ENCODE measurements at regions of chr18 and their contacts with region 1.

Region 1: GRCh38 chr18:42025974-42026625 is 71.1 kb downstream of the PIK3C3 start:
- DNase-seq: no peak
- H3K4me3 Mint-ChIP-seq: no peak overlapping the region
- H3K27ac Mint-ChIP-seq: no peak overlapping the region
- H3K4me1 Mint-ChIP-seq: peaks cover 31% of the 10 kb centered on the region
- H3K27me3 Mint-ChIP-seq: no peaks in the 10 kb centered on the region

Region 2: DNA sequence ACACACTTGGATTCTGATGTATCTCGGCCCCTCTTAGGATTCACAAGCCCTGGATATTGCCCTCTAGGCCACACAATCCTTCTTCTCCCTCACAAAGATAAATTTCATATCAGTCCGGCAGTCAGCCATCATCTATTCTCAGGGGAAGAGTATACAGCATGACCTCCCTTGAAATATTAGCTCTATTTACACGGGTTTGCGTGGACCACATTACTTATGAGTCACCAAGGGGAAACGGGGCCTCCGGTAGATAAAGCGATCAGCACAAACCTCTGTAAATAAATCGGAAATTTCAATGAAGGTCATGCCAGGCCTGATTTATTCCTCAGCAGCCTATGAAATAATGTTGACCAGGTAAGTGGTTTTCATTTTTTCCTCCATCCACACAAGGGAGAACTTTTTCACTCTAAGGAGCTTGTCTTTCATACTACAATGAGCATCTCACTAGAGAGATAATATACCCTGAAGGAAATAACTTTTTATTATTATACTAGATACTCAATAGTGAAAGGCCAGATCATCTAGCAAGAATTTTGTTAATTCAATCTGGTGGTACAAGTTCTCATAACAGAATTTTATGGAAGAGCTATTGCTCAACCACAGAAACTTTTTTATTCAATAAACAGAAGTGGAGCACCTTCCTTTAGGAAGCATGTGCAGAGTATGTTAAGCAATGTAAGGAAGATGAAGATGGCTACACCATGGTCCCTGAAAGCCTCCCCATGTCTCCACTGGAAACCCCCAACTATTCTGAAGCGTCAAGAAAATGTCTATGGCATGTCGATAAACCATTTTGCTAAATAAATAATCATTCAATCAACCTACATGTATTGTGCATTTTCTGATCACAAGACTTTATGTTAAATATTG is 196.2 kb before region 1 on chr18:
- intact Hi-C with region 1: no loop called
- DNase-seq: no peak
- H3K4me3 Mint-ChIP-seq: no peak overlapping the region
- H3K27ac Mint-ChIP-seq: no peak overlapping the region
- H3K4me1 Mint-ChIP-seq: no peaks in the 10 kb centered on the region
- H3K27me3 Mint-ChIP-seq: no peaks in the 10 kb centered on the region

Region 3: DNA sequence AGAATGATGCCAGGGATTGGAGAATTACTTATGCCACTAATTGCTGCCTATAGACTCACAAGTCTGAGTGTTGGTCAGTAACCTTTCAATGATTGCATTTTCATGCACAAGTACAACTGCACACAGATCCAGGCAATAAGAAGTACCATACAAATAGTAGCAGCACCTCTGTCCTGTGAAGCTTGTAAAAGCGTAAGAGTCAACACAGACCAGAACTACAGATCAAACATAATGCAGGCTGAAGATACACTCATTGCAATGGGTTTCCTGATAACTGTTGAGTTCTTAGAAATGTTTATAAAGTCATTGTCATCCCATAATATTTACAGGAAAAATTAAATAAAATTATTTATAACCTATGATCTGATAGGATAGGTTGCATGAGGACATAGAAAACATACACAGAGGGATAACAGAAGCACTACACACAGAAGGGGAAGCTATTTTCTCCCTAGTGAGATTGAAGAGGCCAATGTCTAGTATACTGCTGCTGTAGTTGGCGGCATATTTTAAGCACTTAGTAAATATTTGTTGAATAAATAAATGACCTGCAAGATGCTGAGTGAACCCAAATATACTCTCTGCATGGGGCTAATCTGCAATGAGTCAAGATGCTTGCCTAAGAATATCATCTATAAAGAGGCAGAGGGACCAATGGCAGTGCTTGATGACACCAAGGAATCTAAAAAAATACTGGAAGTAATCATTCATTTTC is 76.7 kb before region 1 on chr18:
- intact Hi-C with region 1: loop called (anchors 1 kb)
- DNase-seq: no peak
- H3K4me3 Mint-ChIP-seq: no peak overlapping the region
- H3K27ac Mint-ChIP-seq: peak overlapping the region; percentile 78
- H3K4me1 Mint-ChIP-seq: peaks cover 21% of the 10 kb centered on the region
- H3K27me3 Mint-ChIP-seq: peaks cover 11% of the 10 kb centered on the region

Region 4: GRCh38 chr18:42011053-42011452 is 15.0 kb before region 1 on chr18:
- intact Hi-C with region 1: loop called (anchors 1 kb)
- DNase-seq: no peak
- H3K4me3 Mint-ChIP-seq: no peak overlapping the region
- H3K27ac Mint-ChIP-seq: no peak overlapping the region
- H3K4me1 Mint-ChIP-seq: peaks cover 15% of the 10 kb centered on the region
- H3K27me3 Mint-ChIP-seq: no peaks in the 10 kb centered on the region